ENCODE measurements at regions of chr11 and their contacts with region 1.

Region 1: GRCh38 chr11:112086422-112087191 is at the starts of genes SDHD and TIMM8B:
- DNase-seq: peak; percentile 98
- H3K4me3 ChIP-seq: peak within 1 kb of the TSS; percentile 89
- H3K27ac ChIP-seq: peak within 1 kb of the TSS; percentile 56
- H3K4me1 ChIP-seq: peaks cover 24% of the 10 kb centered on the region
- CTCF ChIP-seq: peak; percentile 33; the same call in 1 of the 2 replicates
- total RNA-seq, gene SDHD: 43.5 and 58.8 TPM in 2 replicates
- total RNA-seq, gene TIMM8B: 71.3 and 94.3 TPM in 2 replicates

Region 2: GRCh38 chr11:111878849-111879636 is 207.6 kb before region 1 on chr11 and contains the starts of genes CFAP68 and FDXACB1:
- CTCF ChIA-PET with region 1: no interaction called
- POLR2A ChIA-PET with region 1: no interaction called
- intact Hi-C with region 1: loop called (anchors 5 kb)
- DNase-seq: peak; percentile 98
- H3K4me3 ChIP-seq: peak within 1 kb of the TSS; percentile 75
- H3K27ac ChIP-seq: peak within 1 kb of the TSS; percentile 72
- H3K4me1 ChIP-seq: peaks cover 12% of the 10 kb centered on the region
- CTCF ChIP-seq: peak; percentile 86
- total RNA-seq, gene CFAP68: 14.8 and 17.3 TPM in 2 replicates
- total RNA-seq, gene FDXACB1: 4.2 and 6.2 TPM in 2 replicates

Region 3: DNA sequence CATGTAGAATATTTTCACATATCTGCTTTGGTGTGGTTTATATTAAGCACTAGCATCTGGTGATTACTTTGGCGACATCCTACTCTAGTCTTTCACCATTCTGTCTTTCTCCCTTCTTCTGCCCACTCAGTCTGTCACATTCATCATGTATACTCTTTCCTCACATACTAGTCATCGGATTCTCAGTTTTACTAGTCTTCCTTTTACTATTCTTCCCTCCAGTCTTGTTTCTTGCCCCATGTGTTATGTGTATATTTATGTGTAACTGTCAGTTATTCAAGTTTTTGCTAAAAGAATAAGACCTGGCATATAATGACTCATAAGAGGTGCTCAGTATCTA is 154.0 kb before region 1 on chr11:
- CTCF ChIA-PET with region 1: interaction called, 3 read pairs
- POLR2A ChIA-PET with region 1: interaction called, 11 read pairs
- intact Hi-C with region 1: loop called (anchors 5 kb)
- DNase-seq: no peak
- H3K4me3 ChIP-seq: no peak overlapping the region
- H3K27ac ChIP-seq: no peak overlapping the region
- H3K4me1 ChIP-seq: peaks cover 26% of the 10 kb centered on the region
- CTCF ChIP-seq: no peak

Region 4: DNA sequence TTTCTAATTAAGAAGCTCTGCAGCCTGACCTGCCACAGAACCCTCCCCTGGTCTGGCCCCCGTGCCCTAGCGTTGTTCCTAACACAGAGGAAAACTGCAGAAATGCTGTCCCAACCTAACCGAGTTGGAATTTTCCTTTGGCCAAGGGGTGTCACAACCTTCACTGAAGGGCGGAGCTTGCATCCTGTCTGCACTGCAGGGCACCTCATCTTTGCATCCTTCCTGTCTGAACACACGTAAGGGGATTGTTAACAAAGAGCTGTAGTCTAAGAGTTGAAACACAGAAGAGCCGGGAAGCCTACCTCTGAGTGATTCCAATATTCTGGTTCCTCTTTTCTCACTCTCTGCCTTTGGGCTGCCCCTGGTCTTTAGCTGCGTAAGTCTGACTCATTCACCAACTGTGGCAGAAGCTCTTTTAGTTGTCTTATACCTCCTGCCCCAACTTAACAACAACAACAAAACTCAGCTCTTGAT is 147.9 kb before region 1 on chr11:
- CTCF ChIA-PET with region 1: no interaction called
- POLR2A ChIA-PET with region 1: no interaction called
- intact Hi-C with region 1: loop called (anchors 5 kb)
- DNase-seq: peak; percentile 67
- H3K4me3 ChIP-seq: peak overlapping the region; percentile 70
- H3K27ac ChIP-seq: peak overlapping the region; percentile 39
- H3K4me1 ChIP-seq: peaks cover 42% of the 10 kb centered on the region
- CTCF ChIP-seq: no peak

Region 5: GRCh38 chr11:112037527-112037926 is 49.1 kb before region 1 on chr11:
- CTCF ChIA-PET with region 1: no interaction called
- POLR2A ChIA-PET with region 1: no interaction called
- intact Hi-C with region 1: no loop called
- DNase-seq: no peak
- H3K4me3 ChIP-seq: no peak overlapping the region
- H3K27ac ChIP-seq: no peak overlapping the region
- H3K4me1 ChIP-seq: no peaks in the 10 kb centered on the region
- CTCF ChIP-seq: no peak